Activated CD4-positive, alpha-beta T cell treated with anti-CD3 and anti-CD28 coated beads for 36 hours (primary cell): ENCODE measurements at regions of chr15 and their contacts with region 1.

Region 1: GRCh38 chr15:63752075-63752684 is 81.6 kb downstream of the HERC1 start:
- DNase-seq: peak; percentile 52
- ATAC-seq: peak; percentile 92
- H3K4me3 Mint-ChIP-seq: no peak overlapping the region
- H3K27ac Mint-ChIP-seq: no peak overlapping the region
- H3K4me1 Mint-ChIP-seq: peaks cover 4% of the 10 kb centered on the region
- H3K27me3 Mint-ChIP-seq: no peaks in the 10 kb centered on the region

Region 2: GRCh38 chr15:63587527-63587926 is 164.7 kb before region 1 on chr15:
- CTCF ChIA-PET with region 1: no interaction called
- POLR2A ChIA-PET with region 1: no interaction called
- intact Hi-C with region 1: no loop called
- DNase-seq: no peak
- ATAC-seq: no peak
- H3K4me3 Mint-ChIP-seq: no peak overlapping the region
- H3K27ac Mint-ChIP-seq: peak overlapping the region; percentile 6
- H3K4me1 Mint-ChIP-seq: peaks cover 22% of the 10 kb centered on the region
- H3K27me3 Mint-ChIP-seq: no peaks in the 10 kb centered on the region

Region 3: GRCh38 chr15:63610200-63610841 is 141.9 kb before region 1 on chr15:
- CTCF ChIA-PET with region 1: interaction called, 19 read pairs
- POLR2A ChIA-PET with region 1: interaction called, 3 read pairs
- intact Hi-C with region 1: no loop called
- DNase-seq: peak; percentile 88
- ATAC-seq: peak; percentile 79
- H3K4me3 Mint-ChIP-seq: no peak overlapping the region
- H3K27ac Mint-ChIP-seq: peak overlapping the region; percentile 88
- H3K4me1 Mint-ChIP-seq: peaks cover 39% of the 10 kb centered on the region
- H3K27me3 Mint-ChIP-seq: no peaks in the 10 kb centered on the region

Region 4: DNA sequence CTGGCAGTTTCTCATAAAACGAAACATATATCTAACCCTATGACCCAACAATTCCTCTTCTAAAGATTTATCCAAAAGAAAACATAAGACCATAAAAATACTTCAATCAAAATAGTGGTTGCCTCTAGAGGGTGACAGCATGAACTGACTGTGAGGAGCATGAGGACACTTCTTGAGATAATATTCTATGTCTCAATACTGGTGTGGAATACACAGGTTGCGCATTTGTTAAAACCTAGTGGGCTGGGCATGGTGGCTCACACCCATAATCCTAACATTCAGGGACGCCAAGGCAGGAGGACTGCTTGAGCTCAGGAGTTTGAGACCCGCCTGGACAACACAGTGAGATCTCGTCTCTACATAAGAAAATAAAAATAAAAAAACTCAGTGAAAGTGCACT is 24.3 kb after region 1 on chr15:
- CTCF ChIA-PET with region 1: interaction called, 14 read pairs
- POLR2A ChIA-PET with region 1: no interaction called
- intact Hi-C with region 1: no loop called
- DNase-seq: no peak
- ATAC-seq: no peak
- H3K4me3 Mint-ChIP-seq: no peak overlapping the region
- H3K27ac Mint-ChIP-seq: no peak overlapping the region
- H3K4me1 Mint-ChIP-seq: peaks cover 28% of the 10 kb centered on the region
- H3K27me3 Mint-ChIP-seq: no peaks in the 10 kb centered on the region

Region 5: GRCh38 chr15:63826528-63826927 is 74.3 kb after region 1 on chr15:
- CTCF ChIA-PET with region 1: interaction called, 12 read pairs
- POLR2A ChIA-PET with region 1: no interaction called
- intact Hi-C with region 1: no loop called
- DNase-seq: peak; percentile 41
- ATAC-seq: no peak
- H3K4me3 Mint-ChIP-seq: no peak overlapping the region
- H3K27ac Mint-ChIP-seq: peak overlapping the region; percentile 74
- H3K4me1 Mint-ChIP-seq: peaks cover 79% of the 10 kb centered on the region
- H3K27me3 Mint-ChIP-seq: no peaks in the 10 kb centered on the region

Region 6: GRCh38 chr15:63891079-63891767 is 139.0 kb after region 1 on chr15:
- CTCF ChIA-PET with region 1: interaction called, 81 read pairs
- POLR2A ChIA-PET with region 1: no interaction called
- intact Hi-C with region 1: loop called (anchors 1 kb)
- DNase-seq: peak; percentile 88
- ATAC-seq: peak; percentile 53
- H3K4me3 Mint-ChIP-seq: no peak overlapping the region
- H3K27ac Mint-ChIP-seq: no peak overlapping the region
- H3K4me1 Mint-ChIP-seq: peaks cover 56% of the 10 kb centered on the region
- H3K27me3 Mint-ChIP-seq: no peaks in the 10 kb centered on the region

Region 7: GRCh38 chr15:63905558-63906265 is 153.5 kb after region 1 on chr15:
- CTCF ChIA-PET with region 1: interaction called, 11 read pairs
- POLR2A ChIA-PET with region 1: no interaction called
- intact Hi-C with region 1: no loop called
- DNase-seq: no peak
- ATAC-seq: peak; percentile 63
- H3K4me3 Mint-ChIP-seq: no peak overlapping the region
- H3K27ac Mint-ChIP-seq: peak overlapping the region; percentile 29
- H3K4me1 Mint-ChIP-seq: peaks cover 16% of the 10 kb centered on the region
- H3K27me3 Mint-ChIP-seq: no peaks in the 10 kb centered on the region

Region 8: DNA sequence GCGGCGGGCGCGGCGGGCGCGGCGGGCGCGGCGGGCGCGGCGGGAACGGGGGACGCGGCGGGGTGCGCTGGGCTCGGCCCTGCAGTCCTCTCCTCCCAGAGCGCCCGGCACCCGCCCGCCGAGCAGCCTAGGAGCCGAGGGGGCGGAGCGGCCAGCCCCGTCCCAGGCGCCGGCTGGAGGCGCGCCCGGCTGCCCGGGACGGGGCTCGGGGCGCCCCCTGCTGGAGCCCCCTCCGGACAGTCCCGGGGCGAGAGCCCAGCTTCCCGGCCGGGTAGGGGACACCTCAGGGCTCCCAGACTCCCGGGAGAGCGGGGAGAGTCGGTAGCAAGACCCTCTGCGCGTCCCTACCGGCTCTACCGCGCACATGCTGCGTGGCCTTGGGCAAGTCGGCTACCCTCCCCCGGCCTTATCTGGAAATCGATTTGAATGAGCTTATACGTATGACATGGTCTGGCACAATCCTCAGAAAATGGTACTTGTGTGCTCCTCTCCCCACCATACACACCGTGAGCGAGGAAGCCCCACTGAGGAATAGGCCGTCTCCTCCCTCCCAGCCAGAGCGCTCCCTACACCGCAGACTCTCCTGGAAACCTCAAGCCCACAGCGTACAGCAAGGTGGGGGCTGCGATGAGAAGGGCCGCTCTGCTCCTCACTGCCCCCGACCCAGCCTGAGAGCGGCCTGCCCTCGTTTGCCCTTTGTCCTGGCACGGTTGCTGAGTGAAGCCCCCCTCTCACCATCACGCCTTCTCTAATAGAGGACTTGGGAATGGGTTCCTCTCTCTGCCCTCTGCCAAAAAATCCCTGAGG is 294.4 kb after region 1 on chr15 and contains the start of gene DAPK2:
- CTCF ChIA-PET with region 1: interaction called, 40 read pairs
- POLR2A ChIA-PET with region 1: no interaction called
- intact Hi-C with region 1: loop called (anchors 1 kb)
- DNase-seq: peak; percentile 73
- ATAC-seq: peak; percentile 90
- H3K4me3 Mint-ChIP-seq: peak within 1 kb of the TSS; percentile 64
- H3K27ac Mint-ChIP-seq: no peak within 1 kb of the TSS
- H3K4me1 Mint-ChIP-seq: peaks cover 7% of the 10 kb centered on the region
- H3K27me3 Mint-ChIP-seq: peaks cover 18% of the 10 kb centered on the region
- total RNA-seq, gene DAPK2: 1.0 to 1.3 TPM